ENCODE measurements at regions of chr12 and their contacts with region 1.

Region 1: GRCh38 chr12:54251667-54252284 is 28.1 kb downstream of the CBX5 start:
- DNase-seq: no peak
- H3K4me3 ChIP-seq: no peak overlapping the region
- CTCF ChIP-seq: peak; percentile 42

Region 2: GRCh38 chr12:54220092-54220557 is 31.7 kb before region 1 on chr12:
- CTCF ChIA-PET with region 1: interaction called, 12 read pairs
- POLR2A ChIA-PET with region 1: no interaction called
- DNase-seq: no peak
- H3K4me3 ChIP-seq: no peak overlapping the region
- CTCF ChIP-seq: peak; percentile 77

Region 3: DNA sequence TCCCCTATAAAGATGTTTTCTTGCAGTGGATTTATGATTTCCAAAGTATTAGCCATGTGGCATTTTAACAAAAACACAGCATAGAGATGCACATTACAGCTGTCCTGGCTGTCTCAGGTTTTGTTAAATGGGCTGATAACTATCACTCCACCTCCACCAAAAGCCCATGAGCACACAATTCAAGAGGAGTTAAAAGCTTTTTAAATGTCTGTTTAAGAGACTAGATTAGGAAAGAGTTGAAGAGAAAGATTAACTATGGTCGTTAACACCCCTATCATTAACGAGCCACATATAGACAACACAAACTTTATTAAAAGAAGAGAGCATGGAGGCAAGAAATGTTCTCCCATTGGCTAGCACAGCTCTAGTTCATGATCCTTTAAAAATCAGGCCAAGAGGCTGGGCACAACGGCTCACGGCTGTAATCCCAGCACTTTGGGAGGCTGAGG is 13.6 kb after region 1 on chr12:
- CTCF ChIA-PET with region 1: interaction called, 25 read pairs
- POLR2A ChIA-PET with region 1: no interaction called
- DNase-seq: no peak
- H3K4me3 ChIP-seq: no peak overlapping the region
- CTCF ChIP-seq: no peak

Region 4: DNA sequence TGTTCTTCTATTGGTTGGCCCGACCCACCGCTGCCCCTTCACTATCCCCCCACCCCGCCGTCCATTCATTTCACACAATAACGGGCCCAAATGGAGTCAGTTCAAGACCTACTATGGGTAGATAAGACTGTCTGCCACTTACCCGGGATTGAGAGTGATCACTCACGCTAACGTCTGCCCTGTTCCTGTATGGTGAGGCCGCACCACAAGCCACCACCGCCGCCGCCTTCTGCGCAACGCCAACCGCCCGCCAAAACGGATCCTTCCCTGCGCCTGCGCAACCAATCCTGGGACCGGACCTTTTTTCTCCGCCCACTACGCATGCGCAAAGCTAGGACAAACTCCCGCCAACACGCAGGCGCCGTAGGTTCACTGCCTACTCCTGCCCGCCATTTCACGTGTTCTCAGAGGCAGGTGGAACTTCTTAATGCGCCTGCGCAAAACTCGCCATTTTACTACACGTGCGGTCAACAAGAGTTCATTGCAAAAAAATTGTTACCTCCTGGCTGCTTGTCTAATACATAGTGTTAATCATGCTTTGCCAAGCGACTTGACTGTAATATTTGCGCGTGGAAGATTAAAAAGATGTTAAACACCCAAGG is 28.2 kb after region 1 on chr12 and contains the start of gene CBX5:
- CTCF ChIA-PET with region 1: interaction called, 15 read pairs
- POLR2A ChIA-PET with region 1: interaction called, 6 read pairs
- DNase-seq: peak; percentile 83
- H3K4me3 ChIP-seq: peak within 1 kb of the TSS; percentile 92
- CTCF ChIP-seq: no peak

Region 5: DNA sequence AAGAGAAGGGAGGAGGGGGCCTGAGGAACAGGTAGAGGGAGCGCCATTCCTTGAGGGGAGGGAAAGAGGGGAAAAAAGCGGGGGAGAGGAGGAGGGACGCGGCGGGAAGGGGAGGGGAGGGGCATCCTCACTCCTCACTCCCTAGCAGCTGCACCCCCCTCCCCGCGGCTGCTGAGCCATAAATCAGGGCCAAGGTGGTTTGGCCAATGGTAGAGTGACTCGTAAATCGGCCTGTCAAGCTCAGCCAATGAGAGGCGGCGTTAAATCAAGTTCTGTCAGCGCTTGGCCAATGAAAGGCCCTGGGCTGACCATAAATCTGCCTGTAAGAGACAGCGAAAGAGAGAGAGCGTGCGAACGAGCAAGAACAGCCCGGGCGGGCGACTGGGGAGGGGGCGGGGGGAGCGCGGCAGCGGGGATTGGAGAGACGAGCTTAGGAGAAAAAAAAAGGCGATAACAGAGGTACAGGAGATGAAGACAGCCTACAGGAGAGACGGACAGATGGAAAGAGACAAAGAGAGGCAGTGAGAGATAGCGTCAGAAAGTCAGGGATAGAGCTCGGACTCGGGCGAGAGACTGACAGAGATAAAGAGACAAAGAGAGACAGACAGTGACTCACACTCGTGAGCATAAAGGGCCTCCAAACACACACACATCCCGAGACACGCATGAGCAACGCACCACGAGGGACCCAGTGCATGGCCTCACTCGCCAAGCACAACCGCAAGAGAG is 107.4 kb after region 1 on chr12:
- CTCF ChIA-PET with region 1: interaction called, 28 read pairs
- POLR2A ChIA-PET with region 1: no interaction called
- DNase-seq: peak; percentile 97
- H3K4me3 ChIP-seq: peak overlapping the region; percentile 59
- CTCF ChIP-seq: no peak

Measured in AG04449 (cell line).